Activated CD8-positive, alpha-beta T cell treated with anti-CD3 and anti-CD28 coated beads for 36 hours (primary cell): ENCODE measurements at regions of chr1 and their contacts with region 1.

Region 1: GRCh38 chr1:62841587-62842169 is 57.7 kb downstream of the ATG4C start:
- DNase-seq: peak; percentile 12
- ATAC-seq: peak; percentile 65
- H3K4me3 Mint-ChIP-seq: no peak overlapping the region
- H3K27ac Mint-ChIP-seq: no peak overlapping the region
- H3K4me1 Mint-ChIP-seq: no peaks in the 10 kb centered on the region
- H3K27me3 Mint-ChIP-seq: no peaks in the 10 kb centered on the region
- CTCF ChIP-seq: peak; percentile 82

Region 2: GRCh38 chr1:62765981-62766380 is 75.7 kb before region 1 on chr1:
- CTCF ChIA-PET with region 1: no interaction called
- POLR2A ChIA-PET with region 1: no interaction called
- intact Hi-C with region 1: no loop called
- DNase-seq: no peak
- ATAC-seq: no peak
- H3K4me3 Mint-ChIP-seq: no peak overlapping the region
- H3K27ac Mint-ChIP-seq: no peak overlapping the region
- H3K4me1 Mint-ChIP-seq: no peaks in the 10 kb centered on the region
- H3K27me3 Mint-ChIP-seq: peaks cover 6% of the 10 kb centered on the region
- CTCF ChIP-seq: no peak

Region 3: GRCh38 chr1:62856960-62857359 is 15.3 kb after region 1 on chr1:
- CTCF ChIA-PET with region 1: interaction called, 21 read pairs
- POLR2A ChIA-PET with region 1: no interaction called
- intact Hi-C with region 1: no loop called
- DNase-seq: no peak
- ATAC-seq: no peak
- H3K4me3 Mint-ChIP-seq: no peak overlapping the region
- H3K27ac Mint-ChIP-seq: no peak overlapping the region
- H3K4me1 Mint-ChIP-seq: no peaks in the 10 kb centered on the region
- H3K27me3 Mint-ChIP-seq: no peaks in the 10 kb centered on the region
- CTCF ChIP-seq: no peak

Region 4: GRCh38 chr1:62906428-62906886 is 64.8 kb after region 1 on chr1:
- CTCF ChIA-PET with region 1: interaction called, 11 read pairs
- POLR2A ChIA-PET with region 1: no interaction called
- intact Hi-C with region 1: no loop called
- DNase-seq: peak; percentile 10
- ATAC-seq: no peak
- H3K4me3 Mint-ChIP-seq: no peak overlapping the region
- H3K27ac Mint-ChIP-seq: no peak overlapping the region
- H3K4me1 Mint-ChIP-seq: peaks cover 10% of the 10 kb centered on the region
- H3K27me3 Mint-ChIP-seq: peaks cover 4% of the 10 kb centered on the region
- CTCF ChIP-seq: peak; percentile 57